CD8-positive, alpha-beta T cell (primary cell): ENCODE measurements at regions of chr9 and their contacts with region 1.

Region 1: DNA sequence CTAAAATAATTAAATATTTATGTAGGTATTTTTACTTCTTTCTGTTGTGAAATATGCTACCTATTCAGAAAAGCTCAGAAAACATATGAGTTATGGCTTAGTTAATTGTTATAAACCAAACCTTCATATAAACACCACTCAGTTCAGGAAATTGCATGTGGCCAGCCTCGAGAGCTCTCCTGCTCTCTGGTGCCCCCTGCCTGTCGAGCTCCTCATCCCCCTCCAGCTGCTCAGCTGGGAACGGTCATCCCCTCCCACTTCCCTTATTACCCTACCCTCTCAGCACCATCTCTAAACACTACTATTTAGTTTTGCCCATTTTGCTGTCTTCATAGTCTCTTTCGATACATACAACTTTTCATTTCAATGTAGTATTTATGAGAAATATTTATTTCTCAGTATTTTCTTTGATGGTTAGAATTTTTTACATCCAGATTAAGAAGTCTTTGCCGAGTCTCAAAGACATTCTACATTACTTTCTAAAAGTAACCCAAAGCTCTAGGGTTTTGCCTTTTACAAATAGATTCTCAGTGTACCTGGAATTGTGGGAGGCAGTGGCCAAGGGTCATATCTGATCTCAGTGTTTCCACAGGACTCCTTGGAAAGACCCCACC is 51.2 kb upstream of the SEMA4D start:
- DNase-seq: peak; percentile 72 to 92 (median 87)
- ATAC-seq: peak; percentile 98
- H3K4me3 ChIP-seq: no peak overlapping the region
- H3K4me3 Mint-ChIP-seq: no peak overlapping the region
- H3K27ac ChIP-seq: no peak overlapping the region
- H3K27ac Mint-ChIP-seq: peak overlapping the region; percentile 60
- H3K4me1 ChIP-seq: peaks cover 15% of the 10 kb centered on the region
- H3K4me1 Mint-ChIP-seq: peaks cover 23% of the 10 kb centered on the region
- H3K27me3 ChIP-seq: no peaks in the 10 kb centered on the region
- H3K27me3 Mint-ChIP-seq: no peaks in the 10 kb centered on the region
- CTCF ChIP-seq: peak; percentile 99

Region 2: GRCh38 chr9:88915932-88916331 is 633.2 kb before region 1 on chr9:
- CTCF ChIA-PET with region 1: no interaction called
- POLR2A ChIA-PET with region 1: no interaction called
- intact Hi-C with region 1: no loop called
- DNase-seq: no peak
- ATAC-seq: no peak
- H3K4me3 ChIP-seq: no peak overlapping the region
- H3K4me3 Mint-ChIP-seq: no peak overlapping the region
- H3K27ac ChIP-seq: no peak overlapping the region
- H3K27ac Mint-ChIP-seq: no peak overlapping the region
- H3K4me1 ChIP-seq: peaks cover 10% of the 10 kb centered on the region
- H3K4me1 Mint-ChIP-seq: peaks cover 17% of the 10 kb centered on the region
- H3K27me3 ChIP-seq: no peaks in the 10 kb centered on the region
- H3K27me3 Mint-ChIP-seq: peaks cover 15% of the 10 kb centered on the region
- CTCF ChIP-seq: no peak

Region 3: DNA sequence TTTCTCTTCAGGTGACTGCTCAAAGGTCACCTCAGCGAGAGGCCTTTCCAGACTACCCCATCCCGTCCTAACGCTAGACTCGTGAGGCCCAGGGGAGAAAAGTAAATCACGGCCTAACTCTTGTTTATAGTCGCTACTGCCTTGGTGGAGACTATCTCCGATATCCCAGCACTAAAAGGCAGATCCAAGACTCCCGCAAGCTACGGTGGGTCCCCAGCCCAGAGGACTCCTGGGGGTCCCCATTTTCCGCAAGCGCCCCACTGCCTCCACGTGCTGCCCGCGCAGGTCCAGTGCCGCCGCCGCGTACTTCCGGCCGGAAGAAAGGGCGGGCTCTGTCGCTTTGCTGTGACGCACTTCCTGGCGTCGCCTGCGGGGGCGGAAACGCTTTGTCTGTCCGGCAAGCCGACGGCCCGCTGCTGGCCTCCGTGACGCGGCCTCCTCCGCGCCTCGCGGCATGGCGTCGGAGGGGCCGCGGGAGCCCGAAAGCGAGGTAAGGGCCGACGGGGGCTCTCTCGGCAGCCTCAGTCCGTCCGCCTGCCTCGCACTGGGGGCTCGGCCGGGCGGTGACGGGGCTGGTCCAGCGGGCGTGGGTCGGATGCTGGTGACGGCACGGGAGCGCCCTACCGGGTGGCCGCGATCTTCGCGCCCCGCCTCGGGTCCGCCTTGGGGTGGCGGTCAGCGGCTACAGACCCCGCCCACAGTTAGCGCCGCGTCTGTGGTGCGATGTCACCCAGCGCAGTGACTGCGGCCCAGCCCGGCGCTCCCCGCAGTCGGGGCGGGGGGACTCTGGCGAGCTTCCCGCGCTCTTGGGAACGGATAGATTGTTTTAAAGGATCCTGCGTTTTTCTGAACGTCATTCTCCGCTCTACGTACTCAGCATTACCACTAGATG is 230.8 kb before region 1 on chr9 and contains the start of gene SECISBP2:
- CTCF ChIA-PET with region 1: interaction called, 5 read pairs
- POLR2A ChIA-PET with region 1: no interaction called
- intact Hi-C with region 1: loop called (anchors 1 to 2 kb)
- DNase-seq: peak; percentile 86 to 97 (median 92)
- ATAC-seq: peak; percentile 86
- H3K4me3 ChIP-seq: peak within 1 kb of the TSS; percentile 68 to 82
- H3K4me3 Mint-ChIP-seq: peak within 1 kb of the TSS; percentile 81
- H3K27ac ChIP-seq: peak within 1 kb of the TSS; percentile 99
- H3K27ac Mint-ChIP-seq: peak within 1 kb of the TSS; percentile 92
- H3K4me1 ChIP-seq: peaks cover 39% of the 10 kb centered on the region
- H3K4me1 Mint-ChIP-seq: peaks cover 57% of the 10 kb centered on the region
- H3K27me3 ChIP-seq: no peaks in the 10 kb centered on the region
- H3K27me3 Mint-ChIP-seq: no peaks in the 10 kb centered on the region
- CTCF ChIP-seq: no peak
- total RNA-seq, gene SECISBP2: 90.2 to 92.1 TPM

Region 4: GRCh38 chr9:89418882-89419640 is 130.1 kb before region 1 on chr9:
- CTCF ChIA-PET with region 1: interaction called, 128 read pairs
- POLR2A ChIA-PET with region 1: interaction called, 3 read pairs
- intact Hi-C with region 1: no loop called
- DNase-seq: peak; percentile 45 to 85 (median 77)
- ATAC-seq: peak; percentile 65
- H3K4me3 ChIP-seq: peak overlapping the region; percentile 27 to 36
- H3K4me3 Mint-ChIP-seq: peak overlapping the region; percentile 81
- H3K27ac ChIP-seq: peak overlapping the region; percentile 52 to 76
- H3K27ac Mint-ChIP-seq: peak overlapping the region; percentile 98
- H3K4me1 ChIP-seq: peaks cover 70% of the 10 kb centered on the region
- H3K4me1 Mint-ChIP-seq: peaks cover 88% of the 10 kb centered on the region
- H3K27me3 ChIP-seq: no peaks in the 10 kb centered on the region
- H3K27me3 Mint-ChIP-seq: no peaks in the 10 kb centered on the region
- CTCF ChIP-seq: no peak

Region 5: DNA sequence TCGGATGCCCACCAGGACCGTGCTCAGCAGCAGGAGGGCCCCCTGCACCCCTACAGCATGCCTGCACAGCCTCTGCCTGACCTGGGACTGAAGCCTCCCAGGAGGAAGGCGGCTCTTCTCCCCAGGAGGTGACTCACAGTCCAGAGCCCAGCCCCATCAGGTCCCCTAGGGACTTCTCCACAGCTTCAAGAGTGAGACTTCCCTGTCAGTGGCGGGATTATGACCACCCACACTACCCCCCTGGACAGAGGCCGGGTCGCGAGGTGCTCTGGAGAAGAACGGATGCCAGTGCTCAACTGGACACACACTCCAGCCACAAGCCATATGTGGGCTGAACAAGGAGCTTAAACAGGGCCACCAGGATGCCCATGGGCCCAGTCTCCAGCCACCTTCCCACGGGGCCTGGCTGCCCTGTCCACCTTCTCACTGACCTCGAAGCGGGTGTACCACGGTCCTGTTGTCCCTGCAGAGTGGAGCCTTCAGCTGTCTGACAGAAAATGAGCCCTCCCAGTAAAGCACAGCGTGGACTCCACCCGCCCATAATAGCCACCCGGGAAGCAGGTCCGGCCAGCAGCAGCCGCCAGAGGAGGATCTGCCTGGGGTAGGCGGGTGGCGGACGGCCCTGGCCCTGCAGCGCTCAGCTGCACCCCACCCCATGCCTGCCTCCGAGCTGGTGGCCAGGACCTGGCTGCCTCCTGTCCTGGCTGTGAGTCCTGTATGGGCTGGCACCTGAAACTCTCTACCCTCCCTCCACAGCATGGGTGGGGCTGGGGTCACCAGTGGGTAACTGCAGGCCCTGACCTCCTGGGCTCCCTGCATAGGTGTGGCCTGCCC is 105.9 kb before region 1 on chr9:
- CTCF ChIA-PET with region 1: interaction called, 34 read pairs
- POLR2A ChIA-PET with region 1: interaction called, 13 read pairs
- intact Hi-C with region 1: no loop called
- DNase-seq: no peak
- ATAC-seq: no peak
- H3K4me3 ChIP-seq: peak overlapping the region in 1 of 2 experiments; percentile 10
- H3K4me3 Mint-ChIP-seq: no peak overlapping the region
- H3K27ac ChIP-seq: peak overlapping the region; percentile 46 to 50
- H3K27ac Mint-ChIP-seq: peak overlapping the region; percentile 97
- H3K4me1 ChIP-seq: peaks cover 97% of the 10 kb centered on the region
- H3K4me1 Mint-ChIP-seq: peaks cover 89% of the 10 kb centered on the region
- H3K27me3 ChIP-seq: no peaks in the 10 kb centered on the region
- H3K27me3 Mint-ChIP-seq: no peaks in the 10 kb centered on the region
- CTCF ChIP-seq: no peak

Region 6: GRCh38 chr9:89461265-89461664 is 87.9 kb before region 1 on chr9:
- CTCF ChIA-PET with region 1: interaction called, 47 read pairs
- POLR2A ChIA-PET with region 1: interaction called, 18 read pairs
- intact Hi-C with region 1: no loop called
- DNase-seq: peak in 5 of 9 experiments; percentile 37 to 53 (median 46)
- ATAC-seq: peak; percentile 7
- H3K4me3 ChIP-seq: no peak overlapping the region
- H3K4me3 Mint-ChIP-seq: no peak overlapping the region
- H3K27ac ChIP-seq: peak overlapping the region in 1 of 2 experiments; percentile 32
- H3K27ac Mint-ChIP-seq: peak overlapping the region; percentile 98
- H3K4me1 ChIP-seq: peaks cover 97% of the 10 kb centered on the region
- H3K4me1 Mint-ChIP-seq: peaks cover 97% of the 10 kb centered on the region
- H3K27me3 ChIP-seq: no peaks in the 10 kb centered on the region
- H3K27me3 Mint-ChIP-seq: no peaks in the 10 kb centered on the region
- CTCF ChIP-seq: no peak

Region 7: GRCh38 chr9:89483592-89484522 is 65.3 kb before region 1 on chr9:
- CTCF ChIA-PET with region 1: interaction called, 54 read pairs
- POLR2A ChIA-PET with region 1: interaction called, 17 read pairs
- intact Hi-C with region 1: no loop called
- DNase-seq: peak; percentile 44 to 88 (median 81)
- ATAC-seq: peak; percentile 76
- H3K4me3 ChIP-seq: peak overlapping the region; percentile 52
- H3K4me3 Mint-ChIP-seq: peak overlapping the region; percentile 86
- H3K27ac ChIP-seq: peak overlapping the region; percentile 20 to 66
- H3K27ac Mint-ChIP-seq: peak overlapping the region; percentile 96
- H3K4me1 ChIP-seq: peaks cover 77% of the 10 kb centered on the region
- H3K4me1 Mint-ChIP-seq: peaks cover 86% of the 10 kb centered on the region
- H3K27me3 ChIP-seq: no peaks in the 10 kb centered on the region
- H3K27me3 Mint-ChIP-seq: no peaks in the 10 kb centered on the region
- CTCF ChIP-seq: no peak

Region 8: DNA sequence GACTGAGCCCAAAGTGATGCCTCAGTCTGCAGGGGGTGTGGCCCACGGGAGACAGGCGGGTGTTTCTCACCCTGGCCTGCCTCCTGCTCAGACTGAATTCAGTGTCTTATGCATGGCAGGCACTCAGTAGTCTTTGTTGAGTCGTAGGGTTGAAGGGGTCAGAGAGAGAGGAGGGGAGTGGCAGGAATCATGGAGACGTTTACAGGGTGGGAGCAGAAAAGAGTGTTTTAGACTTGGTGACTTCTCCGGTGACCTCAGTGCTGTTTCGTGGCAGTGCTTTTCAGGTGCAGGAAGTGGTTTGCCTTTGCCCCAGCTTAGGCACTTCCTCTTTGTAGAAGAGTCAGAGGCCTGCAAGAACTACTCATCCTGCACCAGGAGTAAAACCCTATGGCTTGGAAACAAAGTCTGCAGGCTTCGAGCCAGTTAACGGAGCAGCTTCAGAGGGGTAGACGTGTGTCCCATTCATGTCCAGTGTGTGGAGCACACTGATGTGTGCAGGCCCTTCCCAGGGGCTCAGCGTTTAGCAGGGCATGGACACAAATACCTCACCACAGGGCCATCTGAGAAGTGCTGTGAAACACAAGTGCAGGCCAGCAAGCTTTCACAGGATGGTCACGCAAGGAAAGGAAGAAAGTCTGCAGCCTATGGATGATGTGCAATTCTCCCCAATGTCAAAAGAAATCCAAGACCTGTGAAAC is 26.7 kb before region 1 on chr9:
- CTCF ChIA-PET with region 1: interaction called, 58 read pairs
- POLR2A ChIA-PET with region 1: interaction called, 6 read pairs
- intact Hi-C with region 1: loop called in 1 of 2 experiments (anchors 2 kb)
- DNase-seq: peak; percentile 46 to 95 (median 77)
- ATAC-seq: peak; percentile 85
- H3K4me3 ChIP-seq: peak overlapping the region in 1 of 2 experiments; percentile 4
- H3K4me3 Mint-ChIP-seq: peak overlapping the region; percentile 48
- H3K27ac ChIP-seq: peak overlapping the region; percentile 60 to 71
- H3K27ac Mint-ChIP-seq: peak overlapping the region; percentile 95
- H3K4me1 ChIP-seq: peaks cover 96% of the 10 kb centered on the region
- H3K4me1 Mint-ChIP-seq: peaks cover 100% of the 10 kb centered on the region
- H3K27me3 ChIP-seq: no peaks in the 10 kb centered on the region
- H3K27me3 Mint-ChIP-seq: no peaks in the 10 kb centered on the region
- CTCF ChIP-seq: no peak